ENCODE measurements at regions of chr10 and their contacts with region 1.

Region 1: GRCh38 chr10:69237528-69238159 is 17.5 kb downstream of the HKDC1 start:
- DNase-seq: no peak
- H3K4me3 ChIP-seq: no peak overlapping the region
- H3K27ac ChIP-seq: no peak overlapping the region
- H3K4me1 ChIP-seq: peaks cover 0 to 35% (median 11%) of the 10 kb centered on the region in 3 donors
- H3K27me3 ChIP-seq: no peaks in the 10 kb centered on the region
- CTCF ChIP-seq: peak; percentile 86 to 99 (median 96)
- POLR2A ChIP-seq: no peak

Region 2: DNA sequence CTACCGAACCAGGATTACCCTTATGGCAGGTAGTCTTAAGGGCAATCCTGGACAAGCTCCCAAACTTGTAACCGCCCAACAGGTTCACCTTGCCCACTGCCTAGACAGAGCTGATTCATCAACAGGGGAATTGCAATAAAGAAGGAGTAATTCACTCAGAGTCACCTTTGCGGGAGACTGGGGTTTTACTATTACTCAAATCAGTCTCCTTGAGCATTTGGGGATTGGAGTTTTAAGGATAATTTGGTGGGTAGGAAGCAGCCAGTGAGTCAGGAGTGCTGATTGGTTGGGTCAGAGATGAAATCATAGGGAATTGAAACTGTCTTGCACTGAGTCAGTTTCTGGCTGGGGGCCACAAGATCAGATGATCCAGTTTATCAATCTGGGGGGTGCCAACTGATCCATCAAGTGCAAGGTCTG is 66.0 kb after region 1 on chr10:
- intact Hi-C with region 1: loop called (anchors 10 kb)
- DNase-seq: no peak
- H3K4me3 ChIP-seq: no peak overlapping the region
- H3K27ac ChIP-seq: peak overlapping the region in 1 of 4 donors; percentile 13
- H3K4me1 ChIP-seq: peaks cover 0 to 11% (median 0%) of the 10 kb centered on the region in 3 donors
- H3K27me3 ChIP-seq: no peaks in the 10 kb centered on the region
- CTCF ChIP-seq: no peak
- POLR2A ChIP-seq: no peak

Region 3: DNA sequence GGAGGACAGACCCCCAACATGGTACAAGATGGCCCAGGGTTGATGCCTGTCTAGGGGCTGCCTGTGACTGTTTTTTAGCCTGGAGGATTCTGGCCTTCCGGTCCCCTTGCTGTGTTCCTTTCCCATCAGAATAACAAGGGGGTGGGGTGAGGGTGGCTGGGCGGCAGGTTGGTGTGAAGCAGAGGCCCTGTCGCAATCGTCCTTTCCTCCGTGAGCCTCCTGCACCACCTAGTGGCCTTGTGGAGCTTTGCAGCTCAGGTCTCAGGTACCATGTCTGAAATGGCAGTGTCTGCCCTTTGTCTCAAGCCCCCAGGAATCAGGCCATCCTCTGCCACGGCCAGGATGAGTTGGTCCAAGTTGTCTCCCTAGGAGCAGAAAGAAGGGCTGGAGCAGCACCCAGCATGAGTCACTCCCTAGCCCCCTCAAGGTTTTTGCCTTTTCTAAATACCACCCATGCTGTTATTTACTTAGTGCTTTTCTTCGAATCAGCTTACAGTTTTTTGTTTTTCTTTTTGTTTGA is 154.9 kb after region 1 on chr10:
- intact Hi-C with region 1: loop called (anchors 5 kb)
- DNase-seq: no peak
- H3K4me3 ChIP-seq: no peak overlapping the region
- H3K27ac ChIP-seq: peak overlapping the region; percentile 29 to 89 (median 82)
- H3K4me1 ChIP-seq: peaks cover 13 to 51% (median 20%) of the 10 kb centered on the region in 3 donors
- H3K27me3 ChIP-seq: no peaks in the 10 kb centered on the region
- CTCF ChIP-seq: peak; percentile 89 to 99 (median 98)
- POLR2A ChIP-seq: no peak

Measured in esophagus squamous epithelium (tissue), 5 donors.